ENCODE measurements at regions of chr14 and their contacts with region 1.

Region 1: GRCh38 chr14:51889851-51890250 is 29.4 kb downstream of the GNG2 start:
- DNase-seq: no peak
- H3K4me3 ChIP-seq: no peak overlapping the region
- H3K4me3 Mint-ChIP-seq: peak overlapping the region in 7 of 8 donors; percentile 22 to 80 (median 65)
- H3K27ac ChIP-seq: peak overlapping the region; percentile 18
- H3K27ac Mint-ChIP-seq: peak overlapping the region; percentile 13 to 91 (median 71)
- H3K4me1 ChIP-seq: peaks cover 87% of the 10 kb centered on the region
- H3K4me1 Mint-ChIP-seq: peaks cover 48 to 93% (median 72%) of the 10 kb centered on the region in 4 donors
- H3K27me3 ChIP-seq: no peaks in the 10 kb centered on the region
- H3K27me3 Mint-ChIP-seq: no peaks in the 10 kb centered on the region

Region 2: GRCh38 chr14:51901475-51902024 is 11.7 kb after region 1 on chr14:
- CTCF ChIA-PET with region 1: interaction called, 10 read pairs
- POLR2A ChIA-PET with region 1: interaction called, 7 read pairs
- intact Hi-C with region 1: loop called (anchors 2 kb)
- DNase-seq: peak; percentile 25 to 68 (median 44)
- H3K4me3 ChIP-seq: no peak overlapping the region
- H3K4me3 Mint-ChIP-seq: peak overlapping the region in 3 of 8 donors; percentile 51 to 65 (median 54)
- H3K27ac ChIP-seq: peak overlapping the region; percentile 23
- H3K27ac Mint-ChIP-seq: peak overlapping the region; percentile 82 to 93 (median 86)
- H3K4me1 ChIP-seq: peaks cover 66% of the 10 kb centered on the region
- H3K4me1 Mint-ChIP-seq: peaks cover 41 to 69% (median 61%) of the 10 kb centered on the region in 4 donors
- H3K27me3 ChIP-seq: no peaks in the 10 kb centered on the region
- H3K27me3 Mint-ChIP-seq: no peaks in the 10 kb centered on the region

Region 3: DNA sequence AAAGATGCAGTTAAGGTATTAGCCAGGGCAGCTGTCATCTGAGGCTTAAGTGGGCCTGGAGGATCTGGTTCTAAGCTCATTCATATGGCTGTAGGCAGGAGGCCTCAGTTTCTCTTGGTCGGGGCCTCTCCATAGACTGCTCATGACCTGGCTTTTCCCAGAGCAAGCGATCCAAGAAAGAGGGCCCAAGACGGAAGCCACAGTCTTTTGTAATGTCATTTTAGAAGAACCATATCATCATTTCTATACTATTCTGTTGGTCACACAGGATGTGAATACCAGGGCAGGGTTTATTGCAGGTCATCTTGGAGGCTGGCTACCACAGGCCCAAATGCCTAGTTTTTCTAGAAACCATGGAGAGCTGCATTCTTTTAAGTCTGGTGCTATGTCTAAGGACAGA is 18.2 kb after region 1 on chr14:
- CTCF ChIA-PET with region 1: interaction called, 6 read pairs
- POLR2A ChIA-PET with region 1: interaction called, 7 read pairs
- intact Hi-C with region 1: loop called (anchors 2 kb)
- DNase-seq: no peak
- H3K4me3 ChIP-seq: no peak overlapping the region
- H3K4me3 Mint-ChIP-seq: no peak overlapping the region
- H3K27ac ChIP-seq: no peak overlapping the region
- H3K27ac Mint-ChIP-seq: peak overlapping the region in 4 of 7 donors; percentile 23 to 89 (median 54)
- H3K4me1 ChIP-seq: peaks cover 49% of the 10 kb centered on the region
- H3K4me1 Mint-ChIP-seq: peaks cover 40 to 70% (median 59%) of the 10 kb centered on the region in 4 donors
- H3K27me3 ChIP-seq: no peaks in the 10 kb centered on the region
- H3K27me3 Mint-ChIP-seq: no peaks in the 10 kb centered on the region

Region 4: DNA sequence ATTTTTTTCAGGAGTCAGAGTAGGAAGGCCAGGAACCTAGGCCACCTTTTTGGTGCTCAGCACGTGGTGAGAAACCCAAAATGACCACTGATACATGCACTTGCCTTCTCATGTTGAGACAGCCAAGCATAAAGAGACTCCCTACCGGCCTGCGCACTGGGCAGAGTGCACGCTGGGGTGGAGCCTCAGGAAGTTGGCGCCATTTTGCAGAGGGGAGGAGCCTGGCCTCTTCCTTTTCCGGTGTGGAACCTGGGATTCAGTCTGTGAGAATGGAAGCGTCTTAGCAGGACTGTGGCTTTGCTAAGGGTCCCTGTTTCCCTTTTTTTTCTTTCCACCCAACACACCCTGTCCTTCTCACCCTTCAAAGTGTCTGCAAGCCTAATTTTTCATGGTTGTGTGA is 36.6 kb after region 1 on chr14:
- CTCF ChIA-PET with region 1: no interaction called
- POLR2A ChIA-PET with region 1: no interaction called
- intact Hi-C with region 1: no loop called
- DNase-seq: no peak
- H3K4me3 ChIP-seq: no peak overlapping the region
- H3K4me3 Mint-ChIP-seq: no peak overlapping the region
- H3K27ac ChIP-seq: no peak overlapping the region
- H3K27ac Mint-ChIP-seq: peak overlapping the region in 6 of 7 donors; percentile 5 to 68 (median 19)
- H3K4me1 ChIP-seq: peaks cover 57% of the 10 kb centered on the region
- H3K4me1 Mint-ChIP-seq: peaks cover 49 to 85% (median 68%) of the 10 kb centered on the region in 4 donors
- H3K27me3 ChIP-seq: no peaks in the 10 kb centered on the region
- H3K27me3 Mint-ChIP-seq: no peaks in the 10 kb centered on the region

Measured in CD4-positive, alpha-beta memory T cell (primary cell).